HepG2 (cell line): ENCODE measurements at regions of chr11 and their contacts with region 1.

Region 1: GRCh38 chr11:122863704-122864326 is 18.7 kb upstream of the JHY start:
- DNase-seq: no peak
- ATAC-seq: no peak
- H3K4me3 ChIP-seq: no peak overlapping the region
- H3K27ac ChIP-seq: no peak overlapping the region
- H3K4me1 ChIP-seq: no peaks in the 10 kb centered on the region
- H3K27me3 ChIP-seq: peaks cover 0 to 3% of the 10 kb centered on the region in 2 experiments; a peak in 1 of 5 replicates
- CTCF ChIP-seq: peak; percentile 50
- EP300 ChIP-seq: no peak
- POLR2A ChIP-seq: no peak
- RAD21 ChIP-seq: no peak

Region 2: DNA sequence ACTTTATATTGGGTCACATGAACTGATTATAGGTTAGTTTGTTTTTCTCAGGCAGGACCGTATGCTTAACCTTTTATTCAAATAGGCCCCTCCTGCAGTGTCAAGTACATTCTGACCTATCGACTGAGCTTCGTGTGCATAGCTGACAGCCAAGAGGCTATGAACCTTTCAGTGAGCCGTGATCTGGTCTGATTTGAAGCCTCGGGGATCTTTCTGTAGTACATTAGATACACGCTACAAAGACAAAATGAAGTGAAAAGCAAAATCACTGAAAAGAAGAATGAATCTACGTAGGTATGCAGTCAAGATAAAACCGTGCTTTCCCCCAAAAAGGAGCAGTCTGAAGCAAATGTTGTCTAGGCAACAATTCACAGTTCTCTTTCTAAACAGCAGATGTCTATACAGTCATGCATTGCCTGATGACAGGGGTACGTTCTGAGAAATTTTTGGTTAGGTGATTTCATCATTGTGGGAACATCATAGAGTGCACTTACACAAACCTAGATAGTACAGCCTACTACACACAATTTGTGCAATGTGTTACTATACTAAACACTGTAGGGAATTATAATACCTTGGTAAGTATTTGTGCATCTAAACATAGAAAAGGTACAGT is 36.9 kb after region 1 on chr11:
- CTCF ChIA-PET with region 1: no interaction called
- POLR2A ChIA-PET with region 1: no interaction called
- in situ Hi-C with region 1: no loop called
- intact Hi-C with region 1: no loop called
- DNase-seq: no peak
- ATAC-seq: no peak; the same call in 2 of the 3 replicates
- H3K4me3 ChIP-seq: no peak overlapping the region
- H3K27ac ChIP-seq: no peak overlapping the region
- H3K4me1 ChIP-seq: no peaks in the 10 kb centered on the region
- H3K27me3 ChIP-seq: peaks cover 0 to 22% of the 10 kb centered on the region in 2 experiments; a peak in 2 of 5 replicates
- CTCF ChIP-seq: no peak
- EP300 ChIP-seq: no peak
- POLR2A ChIP-seq: no peak
- RAD21 ChIP-seq: no peak

Region 3: GRCh38 chr11:123020968-123021367 is 157.2 kb after region 1 on chr11:
- CTCF ChIA-PET with region 1: interaction called, 13 read pairs
- POLR2A ChIA-PET with region 1: no interaction called
- in situ Hi-C with region 1: loop called (anchors 10 kb)
- intact Hi-C with region 1: loop called (anchors 1 kb)
- DNase-seq: peak; percentile 43
- ATAC-seq: peak; percentile 86
- H3K4me3 ChIP-seq: no peak overlapping the region
- H3K27ac ChIP-seq: no peak overlapping the region
- H3K4me1 ChIP-seq: no peaks in the 10 kb centered on the region
- H3K27me3 ChIP-seq: peaks cover 3 to 35% of the 10 kb centered on the region in 2 experiments; a peak in 4 of 5 replicates
- CTCF ChIP-seq: peak; percentile 55
- EP300 ChIP-seq: no peak
- POLR2A ChIP-seq: no peak
- RAD21 ChIP-seq: no peak

Region 4: DNA sequence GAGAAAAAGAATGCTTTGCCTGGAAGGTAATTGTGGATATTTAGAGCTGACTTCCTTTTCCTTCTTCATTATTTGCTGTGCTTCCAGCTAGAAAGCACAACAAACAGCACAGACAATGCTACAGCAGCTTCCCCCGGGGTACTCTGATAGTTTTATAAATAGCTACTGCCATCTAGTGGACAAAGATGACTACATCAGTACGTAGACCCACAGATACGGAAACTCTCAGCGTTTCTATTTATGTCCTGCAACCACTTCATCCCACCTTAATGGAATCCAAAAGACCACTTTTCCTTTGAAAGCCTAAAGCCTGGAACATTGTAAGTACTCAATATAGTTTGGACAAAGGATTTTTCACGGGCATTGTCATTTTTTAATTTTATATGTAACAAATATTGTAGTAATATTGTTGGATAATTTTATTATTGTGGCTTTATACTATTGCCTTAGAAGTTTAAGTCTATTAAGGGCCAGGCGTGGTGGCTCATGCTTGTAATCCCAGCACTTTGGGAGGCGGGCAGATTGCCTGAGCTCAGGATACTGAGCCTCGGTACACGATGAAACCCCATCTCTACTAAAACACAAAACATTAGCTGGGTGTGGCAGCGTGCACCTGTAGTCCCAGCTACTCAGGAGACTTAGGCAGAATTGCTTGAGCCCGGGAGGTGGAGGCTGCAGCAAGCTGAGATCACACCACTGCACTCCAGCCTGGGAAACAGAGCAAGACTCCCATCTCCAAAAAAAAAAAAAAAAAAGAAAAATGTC is 190.7 kb after region 1 on chr11:
- CTCF ChIA-PET with region 1: interaction called, 3 read pairs
- POLR2A ChIA-PET with region 1: no interaction called
- in situ Hi-C with region 1: no loop called
- intact Hi-C with region 1: loop called (anchors 1 kb)
- DNase-seq: peak; percentile 70
- ATAC-seq: peak; percentile 75
- H3K4me3 ChIP-seq: no peak overlapping the region
- H3K27ac ChIP-seq: no peak overlapping the region
- H3K4me1 ChIP-seq: peaks cover 20% of the 10 kb centered on the region
- H3K27me3 ChIP-seq: no peaks in the 10 kb centered on the region
- CTCF ChIP-seq: peak; percentile 71
- EP300 ChIP-seq: no peak
- POLR2A ChIP-seq: peak in 1 of 2 experiments; percentile 29; a peak in 2 of 4 replicates
- RAD21 ChIP-seq: no peak